Left cardiac atrium (tissue), 4 donors: ENCODE measurements at regions of chr1 and their contacts with region 1.

Region 1: DNA sequence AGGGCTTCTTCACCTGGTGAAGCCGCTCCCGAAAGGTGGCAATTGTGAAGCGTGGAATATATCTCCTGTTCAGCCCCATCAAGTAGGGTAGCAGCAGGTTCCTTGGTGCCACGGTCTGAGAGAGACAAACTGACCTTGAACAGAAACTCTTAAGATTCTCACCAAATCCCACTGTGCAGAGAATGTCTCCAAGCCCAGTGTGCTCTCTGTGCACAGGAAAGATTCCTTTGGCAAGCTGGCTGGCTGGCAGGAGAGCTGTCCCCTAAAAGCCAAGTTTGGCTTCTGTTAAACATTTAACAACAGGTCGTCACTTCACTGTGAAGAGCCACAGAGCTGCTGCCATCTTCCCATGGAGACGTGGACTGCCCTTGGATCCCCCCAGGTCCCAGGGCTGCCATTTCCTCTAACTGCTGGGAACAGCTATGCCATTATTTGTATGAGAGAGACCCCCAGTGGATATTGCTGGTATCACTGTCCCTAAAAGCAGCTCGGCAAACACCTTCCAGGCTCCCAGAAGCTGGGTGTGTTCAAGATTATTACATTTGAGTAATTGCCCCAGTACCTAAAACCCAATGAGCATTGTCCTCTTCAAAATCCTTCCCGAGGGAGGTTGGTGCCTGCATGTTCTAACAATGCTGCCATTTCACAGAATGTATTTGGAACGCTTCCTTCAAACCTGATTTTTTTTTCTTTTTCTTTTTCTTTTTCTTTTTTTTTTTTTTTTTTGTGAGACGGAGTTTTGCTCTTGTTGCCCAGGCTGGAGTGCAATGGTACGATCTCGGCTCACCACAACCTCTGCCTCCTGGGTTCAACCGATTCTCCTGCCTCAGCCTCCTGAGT is 71.8 kb downstream of the CD58 start:
- DNase-seq: no peak
- ATAC-seq: peak; percentile 57 to 81

Region 2: GRCh38 chr1:116139592-116140134 is 359.3 kb before region 1 on chr1:
- intact Hi-C with region 1: loop called in 1 of 2 experiments (anchors 1 kb)
- DNase-seq: no peak
- ATAC-seq: no peak

Region 3: GRCh38 chr1:117359561-117360289 is 860.7 kb after region 1 on chr1:
- intact Hi-C with region 1: no loop called
- DNase-seq: no peak
- ATAC-seq: no peak